Common myeloid progenitor, CD34-positive (primary cell): ENCODE measurements at regions of chr10 and their contacts with region 1.

Region 1: DNA sequence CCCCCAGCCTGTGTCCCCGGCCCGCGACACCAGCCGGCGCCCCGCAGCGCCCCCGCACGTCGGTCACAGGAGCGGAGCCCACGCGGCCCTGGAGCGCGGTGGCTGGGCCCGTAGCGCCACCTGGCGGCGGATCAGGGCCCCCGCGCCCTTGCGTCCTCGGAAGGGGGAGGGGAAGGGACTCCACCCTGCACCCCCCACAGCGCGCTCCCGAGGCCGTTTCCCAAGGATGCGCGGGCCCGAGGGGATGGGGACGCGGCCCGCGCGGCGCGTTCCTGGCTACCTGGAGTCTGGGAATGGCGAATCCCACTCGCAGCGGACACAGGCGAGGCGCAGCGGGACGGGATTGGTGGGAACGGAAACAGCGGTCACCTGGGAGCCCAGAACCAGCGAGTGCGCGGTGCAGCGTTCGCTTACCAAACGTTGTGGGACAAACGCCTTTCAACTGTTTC is 23.8 kb upstream of the MKI67 start:
- DNase-seq: peak; percentile 78 to 88 (median 88)
- H3K4me3 ChIP-seq: peak overlapping the region; percentile 58 to 83 (median 69)
- H3K27ac ChIP-seq: no peak overlapping the region
- H3K4me1 ChIP-seq: peaks cover 0 to 11% (median 10%) of the 10 kb centered on the region in 4 experiments
- H3K27me3 ChIP-seq: peaks cover 0 to 53% (median 5%) of the 10 kb centered on the region in 5 experiments

Region 2: DNA sequence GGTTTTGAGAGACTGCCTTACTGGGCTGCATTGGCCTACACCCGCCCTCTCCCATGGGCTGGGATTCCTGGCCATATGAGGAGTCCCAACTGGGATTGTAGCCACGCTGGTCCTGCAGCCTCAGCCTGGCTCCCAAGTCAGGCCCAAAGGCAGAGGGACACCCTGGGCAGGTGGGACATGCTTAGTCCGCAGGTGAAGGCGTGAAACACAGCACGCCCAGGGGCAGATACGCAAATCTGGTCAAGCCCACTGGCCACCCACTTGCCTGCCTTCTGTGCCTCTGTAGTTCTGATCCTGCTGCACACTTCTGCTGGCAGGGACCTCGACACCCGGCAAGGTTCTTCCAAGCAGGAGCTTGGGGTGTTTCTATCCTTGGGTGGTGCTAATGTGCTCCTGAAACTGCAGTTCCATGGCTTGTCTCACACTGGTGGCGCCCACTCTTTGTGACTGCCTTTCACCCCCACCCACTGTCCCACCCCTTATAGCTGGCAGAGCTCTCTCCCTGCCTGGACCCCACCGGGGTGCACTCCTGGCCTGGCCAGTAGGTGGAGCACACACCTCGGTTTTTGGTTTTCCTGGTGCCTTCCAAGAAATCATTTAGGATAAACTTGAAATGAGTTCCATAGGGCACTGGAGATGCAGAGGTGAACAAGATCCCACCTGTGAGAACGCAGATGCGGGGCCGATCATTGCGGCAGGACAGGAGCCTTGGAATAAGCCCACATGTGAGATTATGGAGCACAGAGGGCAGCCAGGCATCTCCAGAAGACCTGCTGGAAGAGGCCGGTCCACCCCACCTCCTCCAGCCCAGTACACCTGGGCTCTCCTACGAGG is 71.7 kb before region 1 on chr10:
- CTCF ChIA-PET with region 1: interaction called, 55 read pairs
- POLR2A ChIA-PET with region 1: no interaction called
- DNase-seq: peak in 2 of 3 donors; percentile 53 to 60
- H3K4me3 ChIP-seq: no peak overlapping the region
- H3K27ac ChIP-seq: no peak overlapping the region
- H3K4me1 ChIP-seq: peaks cover 0 to 11% (median 5%) of the 10 kb centered on the region in 4 experiments
- H3K27me3 ChIP-seq: peaks cover 0 to 1% (median 0%) of the 10 kb centered on the region in 5 experiments

Region 3: DNA sequence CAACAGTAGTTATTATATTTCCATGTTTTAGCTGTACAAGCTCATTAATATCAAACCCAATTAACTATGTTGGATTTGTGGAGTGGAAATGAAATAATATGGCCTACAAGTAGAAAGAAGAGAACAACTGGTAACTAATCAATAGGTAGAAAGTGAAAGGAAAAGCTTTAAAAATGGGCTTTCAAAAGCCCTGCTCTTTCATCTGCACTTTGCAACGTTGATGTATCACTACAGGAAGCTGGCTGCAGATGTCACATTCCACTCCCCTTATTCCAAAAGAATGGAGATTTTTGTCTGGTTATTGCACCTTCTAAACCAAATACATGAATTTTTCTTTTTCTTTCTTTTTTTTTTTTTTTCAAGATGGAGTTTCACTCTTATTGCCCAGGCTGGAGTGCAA is 12.2 kb before region 1 on chr10:
- CTCF ChIA-PET with region 1: interaction called, 13 read pairs
- POLR2A ChIA-PET with region 1: no interaction called
- DNase-seq: no peak
- H3K4me3 ChIP-seq: no peak overlapping the region
- H3K27ac ChIP-seq: no peak overlapping the region
- H3K4me1 ChIP-seq: no peaks in the 10 kb centered on the region
- H3K27me3 ChIP-seq: peaks cover 0 to 2% (median 0%) of the 10 kb centered on the region in 5 experiments

Region 4: GRCh38 chr10:128161031-128161430 is 11.0 kb after region 1 on chr10:
- CTCF ChIA-PET with region 1: interaction called, 12 read pairs
- POLR2A ChIA-PET with region 1: no interaction called
- DNase-seq: peak in 2 of 3 donors; percentile 56 to 65
- H3K4me3 ChIP-seq: no peak overlapping the region
- H3K27ac ChIP-seq: no peak overlapping the region
- H3K4me1 ChIP-seq: peaks cover 0 to 17% (median 5%) of the 10 kb centered on the region in 4 experiments
- H3K27me3 ChIP-seq: peaks cover 0 to 3% (median 0%) of the 10 kb centered on the region in 5 experiments

Region 5: DNA sequence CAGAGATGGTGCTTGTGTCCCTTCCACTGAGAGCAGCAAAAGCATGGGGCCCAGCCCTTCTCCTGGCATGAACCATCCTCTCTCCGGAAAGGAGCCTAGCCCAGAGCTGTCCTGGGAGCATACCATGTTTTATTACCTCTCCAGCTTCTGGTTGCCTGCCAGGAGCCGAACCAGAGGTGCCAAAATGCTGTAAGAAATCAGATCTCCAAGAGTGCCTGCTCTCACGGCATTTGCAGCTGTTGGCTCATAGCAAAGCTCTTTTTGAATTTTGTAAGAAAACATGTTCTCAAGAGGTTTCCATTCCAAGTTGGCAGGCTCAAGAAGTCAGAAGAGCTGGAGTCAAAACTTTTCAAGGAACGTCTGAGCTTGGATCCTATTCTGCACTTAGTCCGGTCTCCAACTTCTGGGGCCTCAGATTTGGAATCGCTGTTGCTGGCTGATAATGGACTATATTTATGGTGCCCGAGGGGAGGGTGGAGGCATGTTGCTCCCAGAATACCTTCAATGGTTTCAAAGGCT is 187.8 kb after region 1 on chr10:
- CTCF ChIA-PET with region 1: no interaction called
- POLR2A ChIA-PET with region 1: no interaction called
- DNase-seq: no peak
- H3K4me3 ChIP-seq: no peak overlapping the region
- H3K27ac ChIP-seq: no peak overlapping the region
- H3K4me1 ChIP-seq: no peaks in the 10 kb centered on the region
- H3K27me3 ChIP-seq: peaks cover 0 to 34% (median 14%) of the 10 kb centered on the region in 5 experiments